ENCODE measurements at regions of chr16 and their contacts with region 1.

Region 1: GRCh38 chr16:21300309-21301167 is 22.4 kb upstream of the CRYM start:
- DNase-seq: peak; percentile 91
- ATAC-seq: peak; percentile 99

Region 2: GRCh38 chr16:21184834-21185233 is 115.7 kb before region 1 on chr16:
- intact Hi-C with region 1: loop called (anchors 1 kb)
- DNase-seq: no peak
- ATAC-seq: no peak

Region 3: DNA sequence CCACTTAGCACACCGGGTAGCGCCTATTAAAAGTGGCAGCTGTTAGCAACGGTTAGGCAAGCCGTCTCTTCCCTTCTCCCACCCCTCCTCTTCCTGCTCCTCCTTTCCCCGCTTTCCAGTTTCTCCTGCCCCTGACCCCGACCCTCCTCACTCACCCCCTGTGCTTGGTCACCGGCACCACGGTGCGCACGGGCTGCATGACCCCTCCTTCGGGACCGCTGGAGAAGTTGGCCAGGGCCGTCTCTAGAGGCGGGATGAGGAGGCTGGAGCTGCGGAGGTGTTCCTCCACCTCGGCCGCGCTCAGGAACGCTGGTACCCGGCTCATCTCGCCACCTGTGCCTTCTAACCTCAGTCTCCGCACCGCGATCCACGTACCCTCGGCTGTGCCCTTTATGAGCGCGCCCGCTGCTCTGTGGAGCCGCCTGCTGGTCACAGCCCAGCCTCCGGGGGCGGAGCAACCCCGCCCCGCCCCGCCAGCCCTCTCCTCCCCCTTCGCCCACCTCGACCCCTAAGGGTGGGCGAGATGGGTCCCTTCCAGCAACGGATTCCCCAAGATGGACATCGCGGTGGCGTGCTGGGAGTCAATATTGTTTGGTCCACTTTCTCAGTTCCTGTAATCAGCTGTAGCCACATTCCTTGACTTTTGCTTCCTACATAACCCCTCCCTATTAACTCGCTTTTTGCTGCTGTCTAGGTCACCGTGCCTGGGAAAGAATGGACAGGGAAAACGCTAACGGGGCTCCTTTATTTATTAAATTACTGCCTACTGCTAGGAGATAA is 22.4 kb before region 1 on chr16 and contains the start of gene CRYM:
- intact Hi-C with region 1: loop called (anchors 2 kb)
- DNase-seq: peak; percentile 86
- ATAC-seq: peak; percentile 95
- total RNA-seq, gene CRYM: 63.3 TPM

Region 4: DNA sequence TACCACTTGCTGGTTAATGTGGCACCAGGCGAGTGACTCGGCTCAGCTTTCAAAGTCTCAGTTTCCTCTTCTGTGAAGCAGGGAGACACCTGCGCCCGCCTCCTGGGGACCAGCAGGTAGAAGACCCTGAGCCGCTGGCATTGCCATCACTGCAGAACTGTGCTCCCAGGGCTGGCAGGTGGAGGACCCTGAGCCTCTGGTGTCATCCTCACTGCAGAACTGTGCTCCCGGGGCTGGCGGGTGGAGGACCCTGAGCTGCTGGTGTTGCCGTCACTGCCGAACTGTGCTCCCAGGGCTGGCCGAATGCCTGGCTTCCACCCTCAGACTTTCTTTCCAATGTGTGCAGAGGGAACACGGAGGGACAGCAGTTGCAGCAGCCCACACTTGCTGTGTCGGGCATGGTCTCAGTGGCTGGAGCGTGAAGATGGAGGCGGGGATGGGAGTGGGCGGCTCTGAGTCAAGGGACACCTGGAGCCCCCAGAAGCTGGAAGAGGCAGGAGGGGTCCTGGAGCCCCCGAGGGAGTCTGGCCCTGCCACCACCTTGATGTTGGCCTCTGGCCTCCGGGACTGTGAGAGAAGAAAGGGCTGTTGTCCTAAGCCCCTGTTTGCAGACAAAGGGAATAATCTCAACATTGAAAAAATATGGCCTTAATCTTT is 223.0 kb after region 1 on chr16:
- intact Hi-C with region 1: loop called (anchors 10 kb)
- DNase-seq: peak; percentile 73
- ATAC-seq: no peak

Region 5: GRCh38 chr16:21554795-21555585 is 254.5 kb after region 1 on chr16:
- intact Hi-C with region 1: loop called (anchors 10 kb)
- DNase-seq: peak; percentile 97
- ATAC-seq: peak; percentile 76